WTC11 (cell line): ENCODE measurements at regions of chr16 and their contacts with region 1.

Region 1: DNA sequence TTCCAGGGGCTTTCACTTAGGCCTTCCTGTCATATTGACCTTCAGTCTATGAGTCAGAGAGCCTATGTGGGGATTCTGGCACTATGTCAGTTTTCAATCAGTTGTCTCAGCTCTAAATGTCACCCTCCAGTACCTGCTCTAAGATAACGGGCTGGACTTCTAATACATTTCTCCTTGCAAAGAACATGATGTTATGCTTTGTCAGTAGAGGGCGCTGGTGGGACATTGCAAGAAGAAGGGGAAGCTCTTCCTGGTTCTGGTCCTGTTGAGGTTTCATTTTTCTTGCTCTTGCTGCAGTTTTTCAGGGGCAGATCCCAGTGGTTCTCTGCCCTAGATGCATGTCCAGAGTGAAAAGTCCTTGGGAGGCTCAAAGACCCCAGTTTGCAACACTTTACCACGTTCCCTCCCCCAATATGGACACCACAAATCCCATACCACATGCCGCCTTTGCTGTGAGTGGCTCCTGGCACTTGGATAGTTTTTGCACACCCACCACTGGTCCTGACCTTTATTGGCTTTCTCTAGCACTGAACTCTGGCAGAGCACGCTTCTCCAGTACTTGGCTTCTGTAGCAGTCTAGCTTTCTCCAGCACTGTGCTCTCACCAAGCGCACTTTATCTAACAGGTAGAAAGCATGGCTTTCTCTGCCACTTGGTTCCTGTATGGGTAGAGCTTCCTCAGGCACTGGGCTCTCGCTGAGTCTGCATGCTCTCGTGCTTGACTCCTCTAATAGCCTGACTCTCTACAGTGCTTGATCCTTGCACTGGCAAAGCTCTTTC is 49.0 kb downstream of the BCL7C start:
- DNase-seq: peak; percentile 78
- ATAC-seq: peak; percentile 82
- H3K4me3 Mint-ChIP-seq: no peak overlapping the region
- H3K27ac Mint-ChIP-seq: no peak overlapping the region
- H3K4me1 Mint-ChIP-seq: peaks cover 4% of the 10 kb centered on the region
- H3K27me3 Mint-ChIP-seq: peaks cover 34% of the 10 kb centered on the region
- CTCF ChIP-seq: peak; percentile 56; the same call in 1 of the 2 replicates

Region 2: GRCh38 chr16:30786936-30787612 is 57.8 kb before region 1 on chr16 and contains the start of gene ZNF629:
- CTCF ChIA-PET with region 1: interaction called, 10 read pairs
- POLR2A ChIA-PET with region 1: no interaction called
- DNase-seq: peak; percentile 70
- ATAC-seq: peak; percentile 77
- H3K4me3 Mint-ChIP-seq: peak within 1 kb of the TSS; percentile 84
- H3K27ac Mint-ChIP-seq: no peak within 1 kb of the TSS
- H3K4me1 Mint-ChIP-seq: peaks cover 13% of the 10 kb centered on the region
- H3K27me3 Mint-ChIP-seq: peaks cover 10% of the 10 kb centered on the region
- CTCF ChIP-seq: no peak
- total RNA-seq, gene ZNF629: 18.7 to 20.0 TPM (median 19.7 TPM) in 3 replicates

Region 3: DNA sequence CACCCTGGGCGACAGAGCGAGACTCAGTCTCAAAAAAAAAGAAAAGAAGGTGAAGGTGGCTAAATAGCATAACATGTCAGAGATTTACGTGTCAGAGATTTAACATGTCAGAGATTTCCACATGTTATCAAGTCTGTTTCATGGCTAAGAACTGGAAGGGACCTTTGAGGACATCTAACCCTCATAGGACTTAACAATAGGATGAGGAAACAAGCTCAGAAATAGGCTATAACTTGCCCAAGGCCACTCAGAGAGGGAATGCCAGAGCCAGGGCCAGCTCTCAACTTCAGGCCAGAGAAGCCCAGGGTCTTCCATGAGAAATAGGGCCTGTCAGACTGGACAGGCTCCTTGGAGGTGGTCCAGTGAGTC is 31.1 kb before region 1 on chr16:
- CTCF ChIA-PET with region 1: interaction called, 39 read pairs
- POLR2A ChIA-PET with region 1: interaction called, 3 read pairs
- DNase-seq: no peak
- ATAC-seq: no peak
- H3K4me3 Mint-ChIP-seq: peak overlapping the region; percentile 65
- H3K27ac Mint-ChIP-seq: no peak overlapping the region
- H3K4me1 Mint-ChIP-seq: peaks cover 6% of the 10 kb centered on the region; the same call in 1 of the 2 replicates
- H3K27me3 Mint-ChIP-seq: peaks cover 38% of the 10 kb centered on the region
- CTCF ChIP-seq: no peak

Region 4: DNA sequence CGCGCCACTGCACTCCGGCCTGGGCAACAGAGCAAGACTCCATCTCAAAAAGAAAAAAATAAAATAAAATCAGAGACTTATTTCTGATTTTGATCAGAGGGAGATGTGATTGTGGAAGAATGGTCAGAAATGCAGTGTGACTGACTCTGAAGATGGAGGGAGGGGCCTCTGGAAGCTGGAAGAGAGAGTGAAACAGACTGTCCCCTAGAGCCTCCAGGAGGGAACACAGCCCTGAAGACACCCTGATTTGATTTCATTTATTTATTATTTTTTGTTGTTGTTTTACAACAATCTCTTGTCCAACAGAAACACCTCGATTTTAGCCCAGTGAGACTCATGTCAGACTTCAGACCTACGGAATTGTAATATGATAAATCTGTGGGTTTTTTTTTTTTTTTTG is 22.9 kb after region 1 on chr16:
- CTCF ChIA-PET with region 1: interaction called, 23 read pairs
- POLR2A ChIA-PET with region 1: no interaction called
- DNase-seq: no peak
- ATAC-seq: peak; percentile 81
- H3K4me3 Mint-ChIP-seq: no peak overlapping the region
- H3K27ac Mint-ChIP-seq: no peak overlapping the region
- H3K4me1 Mint-ChIP-seq: no peaks in the 10 kb centered on the region
- H3K27me3 Mint-ChIP-seq: peaks cover 27% of the 10 kb centered on the region
- CTCF ChIP-seq: no peak

Region 5: GRCh38 chr16:30902029-30902972 is 57.4 kb after region 1 on chr16:
- CTCF ChIA-PET with region 1: interaction called, 95 read pairs
- POLR2A ChIA-PET with region 1: no interaction called
- DNase-seq: peak; percentile 61
- ATAC-seq: peak; percentile 87
- H3K4me3 Mint-ChIP-seq: peak overlapping the region; percentile 90
- H3K27ac Mint-ChIP-seq: peak overlapping the region; percentile 96
- H3K4me1 Mint-ChIP-seq: peaks cover 9% of the 10 kb centered on the region
- H3K27me3 Mint-ChIP-seq: peaks cover 26% of the 10 kb centered on the region
- CTCF ChIP-seq: no peak

Region 6: DNA sequence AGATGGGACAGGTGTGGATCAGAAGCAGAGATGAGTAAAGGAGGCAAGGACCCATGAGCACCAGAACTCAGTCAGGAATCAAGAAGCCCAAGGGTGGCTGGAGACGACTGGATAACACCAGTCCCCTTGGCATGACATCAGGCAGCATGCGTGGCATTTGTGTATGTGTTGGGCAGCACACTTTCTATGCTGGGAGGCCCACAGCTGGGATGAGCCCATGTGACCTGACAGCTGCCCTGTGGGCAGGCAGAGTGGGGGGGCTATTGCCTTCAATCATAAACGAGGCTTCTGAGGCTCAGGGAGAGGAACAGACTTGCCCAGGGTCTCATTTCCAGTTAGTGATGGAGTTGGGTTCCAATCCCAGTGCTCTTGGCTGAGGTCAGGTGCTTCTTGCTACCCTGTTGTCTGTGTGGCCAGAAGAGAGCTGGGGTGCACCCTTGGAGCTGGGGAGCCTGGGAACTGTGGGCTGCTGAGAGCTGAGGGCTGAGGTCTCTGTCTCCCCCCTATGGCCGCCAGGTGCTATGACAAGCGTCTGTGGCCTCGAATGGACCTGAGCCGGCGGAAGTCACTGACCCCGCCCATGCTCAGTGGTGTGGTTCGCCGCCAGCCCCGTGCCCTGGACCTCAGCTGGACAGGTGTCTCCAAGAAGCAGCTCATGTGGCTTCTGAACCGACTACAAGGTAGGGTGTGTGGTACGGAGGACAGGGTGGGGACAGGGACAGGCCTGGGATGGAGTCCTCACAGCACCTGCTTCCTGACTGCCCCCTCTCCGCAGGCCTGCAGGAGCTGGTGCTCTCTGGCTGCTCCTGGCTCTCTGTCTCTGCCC is 97.0 kb after region 1 on chr16:
- CTCF ChIA-PET with region 1: interaction called, 28 read pairs
- POLR2A ChIA-PET with region 1: no interaction called
- DNase-seq: peak; percentile 82
- ATAC-seq: peak; percentile 97
- H3K4me3 Mint-ChIP-seq: no peak overlapping the region
- H3K27ac Mint-ChIP-seq: no peak overlapping the region
- H3K4me1 Mint-ChIP-seq: peaks cover 13% of the 10 kb centered on the region
- H3K27me3 Mint-ChIP-seq: no peaks in the 10 kb centered on the region
- CTCF ChIP-seq: peak; percentile 81